Right ventricle myocardium inferior (tissue), 1 donor: ENCODE measurements at regions of chr4 and their contacts with region 1.

Region 1: DNA sequence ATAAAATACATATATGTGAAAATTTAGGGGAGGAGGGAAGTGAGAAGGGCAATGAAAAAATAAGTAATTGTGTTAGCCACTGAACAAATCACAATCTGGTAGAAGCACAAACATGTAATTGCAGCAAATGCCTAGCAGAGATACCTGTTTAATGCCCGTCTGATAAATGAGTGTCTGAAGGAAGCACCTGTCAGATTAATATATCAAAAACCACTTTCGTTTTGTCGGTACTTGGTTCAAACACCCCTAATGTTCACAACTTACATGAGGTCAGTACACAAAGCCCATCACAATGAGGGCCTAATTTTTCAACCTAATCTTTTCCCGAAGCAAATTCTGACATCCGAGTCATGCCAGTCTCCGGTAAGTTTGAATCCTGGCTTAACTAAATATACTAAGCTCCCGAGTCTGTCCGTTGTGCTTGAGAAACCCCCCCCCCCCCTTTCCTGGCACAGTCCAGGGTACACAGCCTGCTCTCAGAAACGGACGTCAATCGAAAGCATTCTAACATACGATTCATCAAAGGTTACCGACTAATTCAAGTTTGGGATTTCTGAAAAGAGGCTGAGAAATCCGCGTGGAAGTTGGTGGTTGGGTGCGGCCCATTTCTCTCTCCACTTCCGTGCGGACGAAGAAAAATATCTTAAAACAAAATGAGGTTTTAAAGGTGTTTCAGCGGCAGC is 758 bp downstream of the SDAD1 start:
- DNase-seq: no peak
- ATAC-seq: no peak

Region 2: DNA sequence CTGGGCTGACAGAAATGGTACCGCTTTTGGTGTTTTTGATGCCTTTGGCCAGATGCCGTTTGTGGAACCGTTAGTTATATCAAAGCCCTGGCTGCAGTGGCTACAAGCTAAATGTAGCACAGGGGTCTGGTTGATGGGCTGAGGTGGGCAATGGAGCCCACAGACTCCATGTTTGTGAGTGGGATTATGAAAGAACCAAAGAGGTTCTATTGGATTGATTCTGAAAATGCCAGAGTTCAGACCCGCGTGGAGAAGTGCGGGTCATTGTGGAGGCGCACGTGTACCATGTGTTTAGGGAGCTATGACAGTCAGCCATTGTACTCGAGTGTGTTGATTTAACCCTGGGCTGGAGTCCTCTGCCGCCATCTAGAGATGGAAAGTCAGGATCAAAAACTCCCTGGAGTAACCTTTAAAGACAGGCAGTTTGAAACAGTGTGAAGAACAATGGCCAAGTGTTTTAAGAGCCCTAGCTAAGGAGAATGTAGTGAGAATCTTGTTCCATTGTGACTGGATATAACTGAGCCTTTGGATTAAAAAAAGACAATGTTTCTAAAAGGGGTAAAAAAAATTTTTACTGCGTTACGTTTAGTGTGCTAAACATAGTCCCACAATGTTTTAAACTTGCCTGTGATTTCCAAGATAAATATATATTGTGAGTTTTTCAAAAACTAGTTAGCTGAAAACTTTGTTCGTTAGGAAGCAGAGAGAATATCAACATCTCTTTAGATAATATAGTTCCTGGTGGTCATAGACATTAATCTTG is 97.2 kb after region 1 on chr4:
- intact Hi-C with region 1: loop called (anchors 5 kb)
- DNase-seq: no peak
- ATAC-seq: peak; percentile 75